RWPE1 (cell line): ENCODE measurements at regions of chr1 and their contacts with region 1.

Region 1: GRCh38 chr1:226201029-226201593 is 14.6 kb upstream of the ACBD3 start:
- DNase-seq: no peak
- H3K27ac ChIP-seq: no peak overlapping the region
- CTCF ChIP-seq: 0 out of 2 replicates have a peak, but pooled peaks have one; percentile 8

Region 2: GRCh38 chr1:226132728-226133503 is 68.2 kb before region 1 on chr1:
- CTCF ChIA-PET with region 1: interaction called, 75 read pairs
- POLR2A ChIA-PET with region 1: interaction called, 3 read pairs
- DNase-seq: peak; percentile 37
- H3K27ac ChIP-seq: peak overlapping the region; percentile 11
- CTCF ChIP-seq: no peak

Region 3: GRCh38 chr1:226157761-226158316 is 43.3 kb before region 1 on chr1:
- CTCF ChIA-PET with region 1: interaction called, 12 read pairs
- POLR2A ChIA-PET with region 1: no interaction called
- DNase-seq: no peak
- H3K27ac ChIP-seq: no peak overlapping the region
- CTCF ChIP-seq: no peak

Region 4: GRCh38 chr1:226186124-226187018 is 14.7 kb before region 1 on chr1 and contains the start of gene ACBD3:
- CTCF ChIA-PET with region 1: interaction called, 12 read pairs
- POLR2A ChIA-PET with region 1: no interaction called
- DNase-seq: peak; percentile 88
- H3K27ac ChIP-seq: peak within 1 kb of the TSS; percentile 89
- CTCF ChIP-seq: no peak

Region 5: DNA sequence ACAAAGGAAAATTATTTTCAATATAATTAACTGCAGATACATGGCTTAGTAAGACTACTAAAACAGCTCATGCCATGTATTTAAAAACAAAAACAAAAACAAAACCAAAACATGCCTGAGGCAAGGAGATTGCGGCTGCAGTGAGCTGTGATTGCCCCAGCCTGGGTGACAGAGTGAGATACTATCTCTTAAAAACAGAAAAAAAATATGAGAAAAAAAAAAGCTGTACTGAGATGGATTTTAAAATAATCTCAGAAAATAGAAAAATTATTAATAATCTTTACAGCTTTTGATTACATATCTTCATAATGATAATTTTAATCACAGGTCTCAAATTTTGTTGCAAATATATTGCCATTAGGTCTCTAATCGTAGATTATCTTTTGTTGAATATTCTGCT is 131.8 kb after region 1 on chr1:
- CTCF ChIA-PET with region 1: interaction called, 14 read pairs
- POLR2A ChIA-PET with region 1: interaction called, 4 read pairs
- DNase-seq: no peak
- H3K27ac ChIP-seq: no peak overlapping the region
- CTCF ChIP-seq: no peak

Region 6: GRCh38 chr1:226424228-226425003 is 223.3 kb after region 1 on chr1:
- CTCF ChIA-PET with region 1: no interaction called
- POLR2A ChIA-PET with region 1: no interaction called
- DNase-seq: peak; percentile 65
- H3K27ac ChIP-seq: no peak overlapping the region
- CTCF ChIP-seq: peak; percentile 62

Region 7: DNA sequence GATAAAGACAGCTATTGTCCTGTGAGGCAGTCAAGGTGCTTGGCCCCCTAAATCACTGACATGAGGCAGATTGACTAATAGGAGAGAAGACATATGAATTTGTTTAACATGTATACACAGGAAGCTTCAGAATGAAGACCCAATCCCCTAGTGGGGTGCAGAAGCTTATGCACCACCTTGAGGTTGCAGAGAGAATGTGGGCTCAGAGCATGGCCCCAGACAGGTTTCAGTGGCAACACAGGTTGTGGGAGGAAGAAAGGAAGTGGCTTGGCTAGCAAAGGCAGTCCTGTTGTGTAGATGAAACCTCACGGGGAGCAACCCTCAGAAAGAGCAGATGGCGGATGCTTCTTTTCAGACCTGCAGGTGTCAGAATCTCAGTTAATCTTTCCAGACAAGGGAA is 243.8 kb after region 1 on chr1:
- CTCF ChIA-PET with region 1: no interaction called
- POLR2A ChIA-PET with region 1: no interaction called
- DNase-seq: no peak
- H3K27ac ChIP-seq: no peak overlapping the region
- CTCF ChIP-seq: no peak